ENCODE measurements at regions of chr2 and their contacts with region 1.

Region 1: DNA sequence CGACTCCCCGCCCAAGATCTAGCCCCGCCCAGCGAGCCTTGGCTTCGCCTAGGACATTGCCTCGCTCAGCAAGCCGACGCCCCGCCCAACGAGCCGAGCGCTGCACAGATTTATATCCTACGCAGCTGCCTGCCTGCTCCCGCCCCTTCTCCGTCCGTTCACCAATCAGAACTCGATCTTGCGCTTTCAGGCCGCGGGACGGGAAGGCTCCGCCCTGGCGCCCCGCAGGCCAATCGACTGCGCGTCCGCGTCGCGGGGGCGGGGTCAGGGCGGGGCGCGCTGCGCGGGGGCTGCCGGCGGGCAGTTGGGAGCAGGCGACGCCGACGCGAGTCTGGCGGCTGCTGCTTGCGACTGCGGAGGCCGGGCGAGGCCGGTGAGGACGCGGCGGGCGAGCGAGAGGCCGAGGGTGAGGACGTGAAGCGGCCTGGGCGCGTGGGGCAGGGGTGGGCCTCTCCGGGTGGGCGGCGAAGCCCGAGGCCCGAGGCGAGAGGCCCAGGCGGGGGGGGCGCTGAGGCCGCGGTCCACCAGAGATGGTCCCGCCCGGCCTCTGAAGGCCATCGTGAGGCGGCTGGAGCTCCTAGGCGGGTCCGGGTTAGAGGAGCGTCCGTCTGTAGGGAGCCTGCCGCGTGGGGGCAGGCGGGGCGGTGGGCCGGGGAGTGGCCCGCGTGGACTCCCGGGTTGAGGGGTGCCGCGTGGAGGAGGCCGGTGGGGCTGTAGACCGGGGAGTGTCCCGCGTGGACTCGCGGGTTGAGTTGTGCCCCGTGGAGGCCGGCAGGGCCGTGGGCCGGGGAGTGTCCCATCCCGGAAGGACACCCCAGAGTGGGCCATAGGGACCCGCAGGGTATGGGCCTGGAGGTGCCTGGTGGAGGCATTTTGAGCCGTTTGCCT is at the start of gene FARP2:
- DNase-seq: peak; percentile 95 to 100 (median 97)
- ATAC-seq: peak; percentile 94
- H3K4me3 ChIP-seq: peak within 1 kb of the TSS; percentile 55
- H3K4me3 Mint-ChIP-seq: peak within 1 kb of the TSS; percentile 86
- H3K27ac ChIP-seq: peak within 1 kb of the TSS in 1 of 2 donors; percentile 20
- H3K27ac Mint-ChIP-seq: peak within 1 kb of the TSS; percentile 77
- H3K4me1 ChIP-seq: peaks cover 20% of the 10 kb centered on the region
- H3K4me1 Mint-ChIP-seq: peaks cover 28% of the 10 kb centered on the region
- H3K27me3 ChIP-seq: no peaks in the 10 kb centered on the region
- H3K27me3 Mint-ChIP-seq: no peaks in the 10 kb centered on the region
- CTCF ChIP-seq: no peak
- total RNA-seq, gene FARP2: 17.2 to 18.3 TPM

Region 2: DNA sequence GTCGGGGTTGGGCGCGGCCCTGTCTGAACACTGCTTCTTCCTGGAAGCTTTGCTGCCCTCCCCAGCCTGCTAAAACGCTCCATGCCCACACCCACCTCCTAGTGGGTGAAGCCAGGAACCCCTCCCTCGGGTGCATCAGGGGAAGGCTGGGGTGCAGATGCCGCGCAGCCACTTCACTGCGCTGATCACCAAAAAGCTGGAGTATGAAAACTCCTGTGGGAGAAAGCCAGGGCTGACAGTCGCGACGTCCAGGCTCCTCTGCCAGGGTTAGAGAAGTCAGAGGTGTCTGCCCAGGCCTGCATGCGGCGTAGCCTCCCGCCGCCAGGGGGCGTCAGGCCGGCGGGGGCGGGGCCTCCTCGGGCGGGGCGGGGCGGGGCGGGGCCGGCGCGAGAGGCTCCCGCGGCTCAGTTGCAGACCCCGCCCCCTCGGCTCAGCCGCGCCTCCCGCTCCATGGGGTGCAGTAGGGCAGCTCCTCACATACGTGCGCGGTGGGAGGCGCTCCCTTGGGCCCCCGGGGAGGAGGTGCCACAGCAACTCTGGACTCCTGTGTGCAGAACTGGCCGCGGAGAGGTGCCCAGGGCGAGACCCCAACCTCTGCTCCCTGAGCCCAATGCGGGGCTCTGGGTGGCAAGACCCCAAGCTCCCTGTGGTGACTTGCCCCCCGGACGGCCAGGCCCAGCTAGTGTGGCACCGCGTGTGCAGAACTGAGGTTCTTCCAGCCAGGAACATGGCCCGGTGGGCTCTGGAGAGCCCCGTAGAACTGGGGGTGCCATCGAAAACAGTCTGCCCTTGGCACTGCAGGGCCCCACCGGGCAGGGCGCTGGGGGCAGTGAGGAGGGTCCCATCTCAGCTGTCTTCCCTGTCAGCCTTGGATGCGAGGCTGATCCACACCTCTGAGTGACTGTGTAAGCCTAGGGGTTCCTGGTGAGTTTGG is 789.8 kb before region 1 on chr2:
- CTCF ChIA-PET with region 1: no interaction called
- POLR2A ChIA-PET with region 1: no interaction called
- intact Hi-C with region 1: loop called in 1 of 2 experiments (anchors 5 kb)
- DNase-seq: peak; percentile 89 to 98 (median 95)
- ATAC-seq: peak; percentile 60
- H3K4me3 ChIP-seq: peak overlapping the region; percentile 87
- H3K4me3 Mint-ChIP-seq: peak overlapping the region; percentile 96
- H3K27ac ChIP-seq: peak overlapping the region; percentile 91 to 97
- H3K27ac Mint-ChIP-seq: peak overlapping the region; percentile 98
- H3K4me1 ChIP-seq: peaks cover 88% of the 10 kb centered on the region
- H3K4me1 Mint-ChIP-seq: peaks cover 84% of the 10 kb centered on the region
- H3K27me3 ChIP-seq: no peaks in the 10 kb centered on the region
- H3K27me3 Mint-ChIP-seq: no peaks in the 10 kb centered on the region
- CTCF ChIP-seq: peak; percentile 86

Region 3: DNA sequence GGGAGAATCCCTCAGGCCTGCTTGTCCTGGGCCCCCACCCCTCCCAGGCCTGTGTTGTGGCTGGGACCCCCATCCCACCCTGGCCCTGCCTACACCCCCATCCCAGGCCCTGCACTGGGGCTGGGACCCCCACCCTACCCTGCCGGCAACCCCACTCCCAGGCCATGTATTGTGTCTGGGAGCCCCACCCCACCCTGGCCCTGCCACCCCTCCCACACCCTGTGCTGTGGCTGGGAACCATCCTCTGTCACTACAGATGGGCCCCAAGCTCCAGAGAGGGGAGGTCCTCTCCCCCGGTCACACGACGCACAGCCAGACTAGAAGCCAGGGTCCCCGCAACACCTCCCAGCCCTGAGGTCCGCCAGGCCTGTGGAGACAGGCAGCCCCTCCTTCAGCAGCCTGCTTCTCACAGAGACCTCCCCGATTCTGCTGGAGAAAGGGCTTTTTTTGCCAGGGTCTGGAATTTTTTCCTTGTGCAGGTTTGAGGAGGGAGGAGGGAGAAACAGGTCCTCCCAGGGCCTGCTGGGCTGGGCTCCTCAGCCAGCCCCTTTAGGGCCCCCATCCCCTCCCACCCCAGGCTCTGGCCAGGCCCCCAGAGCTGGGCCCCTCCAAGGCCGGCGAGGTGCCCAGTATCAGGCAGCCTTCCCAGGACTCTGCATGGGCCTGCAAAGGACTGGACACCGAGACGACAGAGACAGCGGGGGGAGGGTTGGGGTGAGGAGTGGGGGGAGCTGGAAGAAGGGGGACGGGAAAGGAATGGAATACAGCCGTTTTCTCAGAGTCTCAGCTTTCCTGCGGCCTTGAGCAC is 564.2 kb before region 1 on chr2:
- CTCF ChIA-PET with region 1: no interaction called
- POLR2A ChIA-PET with region 1: no interaction called
- intact Hi-C with region 1: no loop called
- DNase-seq: peak in 1 of 14 experiments; percentile 2
- ATAC-seq: no peak
- H3K4me3 ChIP-seq: no peak overlapping the region
- H3K4me3 Mint-ChIP-seq: no peak overlapping the region
- H3K27ac ChIP-seq: no peak overlapping the region
- H3K27ac Mint-ChIP-seq: no peak overlapping the region
- H3K4me1 ChIP-seq: no peaks in the 10 kb centered on the region
- H3K4me1 Mint-ChIP-seq: no peaks in the 10 kb centered on the region
- H3K27me3 ChIP-seq: no peaks in the 10 kb centered on the region
- H3K27me3 Mint-ChIP-seq: peaks cover 15% of the 10 kb centered on the region
- CTCF ChIP-seq: no peak

Region 4: DNA sequence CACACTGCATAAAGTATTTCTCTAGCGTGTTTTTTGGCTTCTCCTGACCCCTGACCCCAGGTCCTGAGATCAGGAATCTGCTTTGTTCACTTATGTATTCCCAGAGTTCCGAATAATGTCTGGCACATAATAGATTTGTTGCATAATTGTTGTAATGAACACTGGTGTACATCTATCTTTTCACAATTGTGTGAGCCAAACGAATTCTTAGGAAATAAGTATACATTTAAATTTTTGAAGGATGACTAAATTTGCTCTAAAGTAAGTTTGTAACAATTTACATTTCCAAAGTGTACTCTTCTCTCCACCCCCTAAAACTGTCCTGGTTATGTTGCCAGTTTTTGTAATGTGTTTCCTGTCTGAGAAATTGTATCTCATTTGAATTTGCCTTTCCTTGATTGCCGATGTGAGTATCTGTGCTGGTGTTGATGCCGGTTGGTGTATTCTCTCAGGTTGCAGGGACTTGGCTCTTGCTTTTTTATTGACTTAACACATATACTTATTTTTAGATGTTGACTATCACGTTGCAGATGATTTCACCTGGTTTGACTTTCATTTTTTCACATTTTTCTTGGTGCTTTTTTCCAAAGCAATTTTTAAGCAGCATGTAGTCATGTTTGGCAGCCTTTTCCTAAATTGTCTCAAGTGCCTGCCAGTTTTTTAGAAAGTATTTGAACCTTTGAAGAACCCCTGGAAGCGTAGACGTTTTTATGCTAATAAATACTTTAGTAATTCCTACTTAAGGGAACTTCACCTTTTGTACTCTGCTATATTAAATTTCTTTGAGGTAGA is 16.2 kb before region 1 on chr2:
- CTCF ChIA-PET with region 1: no interaction called
- POLR2A ChIA-PET with region 1: no interaction called
- intact Hi-C with region 1: no loop called
- DNase-seq: no peak
- ATAC-seq: no peak
- H3K4me3 ChIP-seq: no peak overlapping the region
- H3K4me3 Mint-ChIP-seq: no peak overlapping the region
- H3K27ac ChIP-seq: no peak overlapping the region
- H3K27ac Mint-ChIP-seq: peak overlapping the region; percentile 38
- H3K4me1 ChIP-seq: no peaks in the 10 kb centered on the region
- H3K4me1 Mint-ChIP-seq: peaks cover 31% of the 10 kb centered on the region
- H3K27me3 ChIP-seq: no peaks in the 10 kb centered on the region
- H3K27me3 Mint-ChIP-seq: no peaks in the 10 kb centered on the region
- CTCF ChIP-seq: no peak

Region 5: DNA sequence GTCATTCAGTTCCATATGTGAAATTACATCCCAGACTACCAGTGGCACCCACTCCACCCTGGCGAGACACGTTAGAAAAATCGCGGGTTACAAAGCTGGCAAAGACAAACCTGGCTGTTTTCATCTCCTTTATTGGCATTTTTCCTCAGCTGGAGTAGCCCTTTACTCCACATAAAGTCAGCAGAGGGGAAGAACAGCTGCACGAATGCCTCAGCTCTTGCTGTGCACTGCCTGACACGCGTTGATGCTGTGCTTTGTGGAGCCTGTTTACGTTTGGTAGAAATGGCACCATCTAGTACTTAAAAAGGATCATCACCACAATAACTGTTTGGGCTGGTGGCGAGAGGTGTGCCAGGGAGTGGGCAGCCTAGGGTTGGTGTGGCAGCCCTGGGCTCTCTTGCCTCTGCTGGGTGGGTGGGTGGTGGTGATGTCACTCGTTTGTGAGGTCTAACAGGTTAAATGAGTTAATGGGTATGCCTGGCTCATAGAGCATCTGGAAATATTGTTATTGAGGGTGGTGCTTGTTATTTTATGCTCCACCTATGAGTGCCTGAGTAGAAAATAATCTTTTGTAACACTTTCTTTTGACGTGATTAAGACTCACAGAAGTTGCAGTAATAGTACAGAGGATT is 16.2 kb after region 1 on chr2:
- CTCF ChIA-PET with region 1: no interaction called
- POLR2A ChIA-PET with region 1: no interaction called
- intact Hi-C with region 1: no loop called
- DNase-seq: no peak
- ATAC-seq: no peak
- H3K4me3 ChIP-seq: no peak overlapping the region
- H3K4me3 Mint-ChIP-seq: no peak overlapping the region
- H3K27ac ChIP-seq: no peak overlapping the region
- H3K27ac Mint-ChIP-seq: no peak overlapping the region
- H3K4me1 ChIP-seq: no peaks in the 10 kb centered on the region
- H3K4me1 Mint-ChIP-seq: no peaks in the 10 kb centered on the region
- H3K27me3 ChIP-seq: no peaks in the 10 kb centered on the region
- H3K27me3 Mint-ChIP-seq: no peaks in the 10 kb centered on the region
- CTCF ChIP-seq: no peak

Region 6: GRCh38 chr2:241500431-241500975 is 144.3 kb after region 1 on chr2:
- CTCF ChIA-PET with region 1: no interaction called
- POLR2A ChIA-PET with region 1: no interaction called
- intact Hi-C with region 1: loop called in 1 of 2 experiments (anchors 2 kb)
- DNase-seq: no peak
- ATAC-seq: no peak
- H3K4me3 ChIP-seq: no peak overlapping the region
- H3K4me3 Mint-ChIP-seq: no peak overlapping the region
- H3K27ac ChIP-seq: no peak overlapping the region
- H3K27ac Mint-ChIP-seq: no peak overlapping the region
- H3K4me1 ChIP-seq: no peaks in the 10 kb centered on the region
- H3K4me1 Mint-ChIP-seq: no peaks in the 10 kb centered on the region
- H3K27me3 ChIP-seq: peaks cover 0 to 2% of the 10 kb centered on the region in 2 experiments
- H3K27me3 Mint-ChIP-seq: no peaks in the 10 kb centered on the region
- CTCF ChIP-seq: no peak

Region 7: GRCh38 chr2:241609859-241610793 is 253.9 kb after region 1 on chr2:
- CTCF ChIA-PET with region 1: no interaction called
- POLR2A ChIA-PET with region 1: no interaction called
- intact Hi-C with region 1: loop called (anchors 2 to 5 kb)
- DNase-seq: peak; percentile 82 to 96 (median 89)
- ATAC-seq: peak; percentile 99
- H3K4me3 ChIP-seq: peak overlapping the region; percentile 49
- H3K4me3 Mint-ChIP-seq: peak overlapping the region; percentile 45
- H3K27ac ChIP-seq: no peak overlapping the region
- H3K27ac Mint-ChIP-seq: peak overlapping the region; percentile 77
- H3K4me1 ChIP-seq: peaks cover 24% of the 10 kb centered on the region
- H3K4me1 Mint-ChIP-seq: peaks cover 25% of the 10 kb centered on the region
- H3K27me3 ChIP-seq: no peaks in the 10 kb centered on the region
- H3K27me3 Mint-ChIP-seq: no peaks in the 10 kb centered on the region
- CTCF ChIP-seq: peak; percentile 65

Region 8: DNA sequence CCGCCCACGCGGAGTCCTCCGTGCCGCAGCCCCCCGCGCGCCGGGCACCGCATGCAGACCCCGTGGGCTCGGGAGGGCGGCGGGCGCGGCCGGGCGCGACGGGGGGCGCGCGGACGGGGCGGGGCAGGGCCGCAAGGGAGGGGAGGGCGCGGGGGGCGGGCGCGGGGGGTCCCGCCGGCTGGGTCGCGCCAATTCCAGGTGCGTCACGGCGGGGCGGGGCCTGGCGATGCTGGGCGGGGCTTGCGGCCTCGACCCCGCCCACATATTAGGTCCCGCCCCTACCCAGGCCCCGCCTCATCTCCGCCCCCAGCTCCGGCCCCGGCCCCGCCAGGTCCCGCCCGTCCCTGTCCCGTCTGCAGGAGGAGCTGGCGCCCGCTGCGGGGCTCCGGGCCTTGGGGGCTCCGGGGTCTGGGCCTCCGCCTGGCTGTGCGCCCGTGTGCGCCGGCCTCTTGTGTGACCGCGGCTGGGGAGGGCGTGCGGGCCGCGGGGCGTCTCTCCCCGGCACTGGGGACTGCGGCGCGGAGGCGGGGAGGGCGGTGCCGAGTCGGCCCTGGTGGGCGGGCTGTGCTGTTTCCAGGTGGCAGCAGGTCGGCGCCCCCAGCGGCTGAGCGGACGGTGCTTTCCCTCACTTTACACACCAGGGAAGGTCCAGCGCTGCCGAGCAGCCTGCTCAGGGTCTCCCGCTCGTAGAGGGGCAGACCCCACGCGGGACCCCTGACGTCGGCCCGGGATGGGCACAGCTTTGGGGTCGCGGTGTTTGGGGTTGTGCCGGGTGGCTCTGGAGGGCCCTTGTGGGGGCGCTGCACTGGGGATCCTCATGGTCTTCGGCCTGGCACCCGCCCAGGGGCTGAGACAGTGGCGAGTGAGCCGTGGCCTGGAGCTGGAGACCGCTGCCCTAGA is 346.2 kb after region 1 on chr2:
- CTCF ChIA-PET with region 1: no interaction called
- POLR2A ChIA-PET with region 1: no interaction called
- intact Hi-C with region 1: loop called in 1 of 2 experiments (anchors 5 kb)
- DNase-seq: peak; percentile 81 to 94 (median 84)
- ATAC-seq: peak; percentile 73
- H3K4me3 ChIP-seq: peak overlapping the region; percentile 73
- H3K4me3 Mint-ChIP-seq: peak overlapping the region; percentile 93
- H3K27ac ChIP-seq: peak overlapping the region; percentile 34 to 67
- H3K27ac Mint-ChIP-seq: peak overlapping the region; percentile 87
- H3K4me1 ChIP-seq: peaks cover 28% of the 10 kb centered on the region
- H3K4me1 Mint-ChIP-seq: peaks cover 28% of the 10 kb centered on the region
- H3K27me3 ChIP-seq: no peaks in the 10 kb centered on the region
- H3K27me3 Mint-ChIP-seq: no peaks in the 10 kb centered on the region
- CTCF ChIP-seq: peak; percentile 60

Region 9: DNA sequence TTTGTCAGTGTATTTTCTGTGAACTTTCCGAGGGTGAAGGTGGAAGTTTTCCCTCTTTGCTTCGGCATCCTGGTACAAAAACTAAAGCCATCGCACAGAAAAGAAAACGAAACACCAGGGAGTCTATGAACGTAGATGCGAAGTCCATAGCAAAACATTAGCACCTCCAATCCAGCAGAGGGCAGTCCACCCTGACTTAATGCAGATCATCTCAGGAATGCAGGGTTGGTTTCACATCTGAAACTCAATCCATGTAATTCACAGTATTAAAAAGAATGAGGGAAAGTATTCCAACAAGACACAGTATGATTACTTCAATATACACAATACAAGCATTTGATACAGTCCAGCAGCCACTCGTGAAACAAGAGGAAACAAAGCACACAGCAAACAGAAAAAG is 584.1 kb after region 1 on chr2:
- CTCF ChIA-PET with region 1: no interaction called
- POLR2A ChIA-PET with region 1: no interaction called
- intact Hi-C with region 1: no loop called
- DNase-seq: no peak
- ATAC-seq: no peak
- H3K4me3 ChIP-seq: no peak overlapping the region
- H3K4me3 Mint-ChIP-seq: no peak overlapping the region
- H3K27ac ChIP-seq: no peak overlapping the region
- H3K27ac Mint-ChIP-seq: no peak overlapping the region
- H3K4me1 ChIP-seq: peaks cover 14% of the 10 kb centered on the region
- H3K4me1 Mint-ChIP-seq: peaks cover 10% of the 10 kb centered on the region
- H3K27me3 ChIP-seq: no peaks in the 10 kb centered on the region
- H3K27me3 Mint-ChIP-seq: no peaks in the 10 kb centered on the region
- CTCF ChIP-seq: no peak